HAP-1 (cell line): ENCODE measurements at regions of chr22 and their contacts with region 1.

Region 1: GRCh38 chr22:23128269-23129108 is 13.3 kb downstream of the RSPH14 start:
- DNase-seq: peak; percentile 39 to 87
- H3K4me3 ChIP-seq: no peak overlapping the region
- H3K4me1 ChIP-seq: no peaks in the 10 kb centered on the region
- H3K27me3 ChIP-seq: no peaks in the 10 kb centered on the region

Region 2: GRCh38 chr22:22667966-22668880 is 460.3 kb before region 1 on chr22:
- in situ Hi-C with region 1: no loop called
- DNase-seq: no peak
- H3K4me3 ChIP-seq: no peak overlapping the region
- H3K4me1 ChIP-seq: no peaks in the 10 kb centered on the region
- H3K27me3 ChIP-seq: no peaks in the 10 kb centered on the region

Region 3: GRCh38 chr22:22848364-22848866 is 280.1 kb before region 1 on chr22:
- in situ Hi-C with region 1: loop called (anchors 10 kb)
- DNase-seq: peak; percentile 26 to 82
- H3K4me3 ChIP-seq: no peak overlapping the region
- H3K4me1 ChIP-seq: no peaks in the 10 kb centered on the region
- H3K27me3 ChIP-seq: peaks cover 30% of the 10 kb centered on the region

Region 4: DNA sequence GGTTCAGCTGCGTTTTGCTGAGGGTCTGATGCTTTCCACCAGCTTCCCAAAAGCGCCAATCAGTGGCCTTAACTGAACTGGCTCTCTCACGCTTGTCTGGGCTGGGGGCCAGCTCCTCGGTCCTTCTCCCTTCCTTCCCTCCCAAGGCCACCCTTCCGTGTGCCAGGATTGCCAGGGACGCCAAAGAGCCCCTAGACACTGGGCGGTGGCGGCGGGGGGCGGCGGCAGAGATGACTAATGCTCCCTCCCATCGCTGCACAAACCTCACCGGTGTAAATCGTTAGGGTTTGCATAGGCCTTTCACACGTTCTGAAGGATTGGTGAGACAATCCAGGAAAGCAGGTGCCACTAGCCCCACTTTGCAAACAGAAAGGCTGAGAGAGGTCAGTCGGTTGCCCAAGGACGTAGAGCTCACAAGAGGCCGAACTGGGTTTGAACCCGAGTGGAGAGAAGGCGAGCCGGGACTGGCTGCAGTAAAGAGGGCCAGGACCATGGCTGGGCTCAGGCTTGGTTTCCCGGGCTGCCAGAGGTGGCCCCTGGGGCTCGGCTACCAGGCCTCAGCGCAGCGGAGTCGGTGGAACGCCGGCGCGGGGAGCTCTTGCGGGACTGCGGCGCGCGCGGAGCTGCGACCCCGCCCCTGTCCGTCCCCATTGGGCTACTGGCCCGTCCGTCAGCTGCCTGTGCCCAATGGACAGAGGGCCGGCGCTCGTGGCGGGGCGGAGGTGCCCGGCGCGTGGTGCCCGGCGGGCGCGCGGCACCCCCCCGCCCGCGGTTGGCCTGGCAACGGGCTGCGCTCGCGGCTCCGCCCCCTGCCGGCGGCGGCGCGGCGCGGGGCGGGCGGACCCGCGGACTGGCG is 58.8 kb before region 1 on chr22:
- in situ Hi-C with region 1: no loop called
- DNase-seq: peak; percentile 84 to 95
- H3K4me3 ChIP-seq: peak overlapping the region; percentile 52
- H3K4me1 ChIP-seq: peaks cover 16% of the 10 kb centered on the region
- H3K27me3 ChIP-seq: no peaks in the 10 kb centered on the region

Region 5: GRCh38 chr22:23225724-23226496 is 97.4 kb after region 1 on chr22:
- in situ Hi-C with region 1: no loop called
- DNase-seq: no peak
- H3K4me3 ChIP-seq: no peak overlapping the region
- H3K4me1 ChIP-seq: no peaks in the 10 kb centered on the region
- H3K27me3 ChIP-seq: no peaks in the 10 kb centered on the region

Region 6: DNA sequence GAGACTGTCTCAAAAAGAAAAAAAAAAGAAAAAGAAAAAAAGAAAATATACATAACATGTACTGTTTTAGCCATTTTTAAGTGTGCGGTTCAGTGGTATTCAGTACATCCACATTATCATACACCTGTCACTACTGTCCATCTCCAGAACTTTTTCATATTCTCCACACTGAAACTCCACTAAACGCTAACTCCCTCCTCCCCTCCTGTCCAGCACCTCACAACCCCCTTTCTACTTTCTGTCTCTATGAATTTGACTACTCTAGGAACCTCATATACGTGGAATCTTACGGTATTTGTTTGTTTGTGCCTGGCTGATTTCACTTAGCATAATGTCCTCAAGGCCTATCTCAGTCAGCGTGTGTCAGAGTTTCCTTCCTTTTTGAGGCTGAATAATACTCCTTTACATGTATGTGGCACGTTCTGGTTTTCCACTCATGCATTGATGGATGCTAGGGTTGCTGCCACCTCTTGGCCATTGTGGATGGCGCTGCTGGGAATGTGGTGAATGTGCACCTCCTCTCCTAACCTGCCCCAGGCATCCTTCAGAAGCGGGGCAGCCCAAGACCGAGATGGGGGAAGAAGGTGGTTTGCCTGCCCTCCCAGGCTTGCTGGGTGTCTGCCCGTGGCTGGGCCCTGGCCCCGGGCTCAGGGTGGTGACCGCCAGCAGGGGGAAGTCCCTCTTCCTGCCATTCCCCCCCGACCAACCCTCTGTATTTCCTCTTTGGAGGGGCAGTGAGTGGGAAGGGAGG is 112.3 kb after region 1 on chr22:
- in situ Hi-C with region 1: no loop called
- DNase-seq: peak in 1 of 2 experiments; percentile 16
- H3K4me3 ChIP-seq: no peak overlapping the region
- H3K4me1 ChIP-seq: peaks cover 17% of the 10 kb centered on the region
- H3K27me3 ChIP-seq: no peaks in the 10 kb centered on the region